ENCODE measurements at regions of chr14 and their contacts with region 1.

Region 1: DNA sequence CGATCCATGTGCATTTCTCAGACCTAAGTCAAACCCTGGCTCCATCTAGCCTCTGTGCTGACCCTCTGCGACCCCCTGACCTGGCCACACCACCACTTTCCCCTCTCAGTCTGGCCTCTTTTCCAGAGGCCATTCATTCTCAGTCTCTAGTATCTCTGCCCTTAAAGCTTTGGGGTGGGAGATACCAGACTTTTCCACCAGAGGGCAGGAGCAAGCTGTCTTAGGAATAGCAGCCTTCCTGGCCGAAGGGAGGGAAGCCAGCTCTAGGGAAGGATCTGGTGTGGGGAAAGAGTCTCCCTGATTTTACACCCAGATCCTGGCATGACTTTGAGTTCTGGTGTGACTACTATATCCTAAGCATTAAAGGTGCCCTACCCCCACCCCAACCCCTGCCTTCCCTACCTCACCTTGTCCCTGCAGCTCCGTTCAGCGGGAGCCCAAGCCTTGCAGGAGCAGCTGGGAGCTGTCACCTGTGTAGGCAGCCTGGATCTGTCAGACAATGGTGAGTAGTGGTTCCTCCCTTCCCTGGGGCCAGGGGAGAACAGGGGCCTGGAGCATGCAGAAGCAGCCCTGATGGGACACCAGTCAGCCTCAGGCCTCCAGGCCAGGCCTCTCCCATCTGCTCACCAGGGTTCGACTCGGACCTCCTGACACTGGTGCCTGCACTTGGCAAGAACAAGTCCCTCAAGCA is 6.6 kb downstream of the CARMIL3 start:
- DNase-seq: peak; percentile 43 to 67 (median 52)
- H3K4me3 ChIP-seq: no peak overlapping the region
- H3K4me3 Mint-ChIP-seq: peak overlapping the region in 1 of 7 donors; percentile 22
- H3K27ac ChIP-seq: no peak overlapping the region
- H3K27ac Mint-ChIP-seq: peak overlapping the region in 3 of 8 donors; percentile 65 to 86 (median 85)
- H3K4me1 ChIP-seq: no peaks in the 10 kb centered on the region
- H3K4me1 Mint-ChIP-seq: peaks cover 3 to 8% (median 4%) of the 10 kb centered on the region in 3 donors
- H3K27me3 ChIP-seq: no peaks in the 10 kb centered on the region
- H3K27me3 Mint-ChIP-seq: peaks cover 0 to 1% of the 10 kb centered on the region in 2 donors

Region 2: GRCh38 chr14:24080888-24081738 is 22.7 kb after region 1 on chr14:
- CTCF ChIA-PET with region 1: interaction called, 67 read pairs
- POLR2A ChIA-PET with region 1: interaction called, 5 read pairs
- DNase-seq: peak; percentile 36 to 80 (median 64)
- H3K4me3 ChIP-seq: peak overlapping the region; percentile 62
- H3K4me3 Mint-ChIP-seq: peak overlapping the region; percentile 85 to 93 (median 88)
- H3K27ac ChIP-seq: peak overlapping the region; percentile 61
- H3K27ac Mint-ChIP-seq: peak overlapping the region; percentile 53 to 92 (median 82)
- H3K4me1 ChIP-seq: peaks cover 9% of the 10 kb centered on the region
- H3K4me1 Mint-ChIP-seq: peaks cover 15 to 18% (median 16%) of the 10 kb centered on the region in 3 donors
- H3K27me3 ChIP-seq: no peaks in the 10 kb centered on the region
- H3K27me3 Mint-ChIP-seq: peaks cover 0 to 2% of the 10 kb centered on the region in 2 donors

Region 3: GRCh38 chr14:24339284-24340151 is 281.1 kb after region 1 on chr14 and contains the start of gene RIPK3:
- CTCF ChIA-PET with region 1: no interaction called
- POLR2A ChIA-PET with region 1: no interaction called
- DNase-seq: peak; percentile 50 to 75 (median 57)
- H3K4me3 ChIP-seq: peak within 1 kb of the TSS; percentile 92
- H3K4me3 Mint-ChIP-seq: peak within 1 kb of the TSS; percentile 95 to 97 (median 97)
- H3K27ac ChIP-seq: peak within 1 kb of the TSS; percentile 60
- H3K27ac Mint-ChIP-seq: peak within 1 kb of the TSS; percentile 55 to 96 (median 93)
- H3K4me1 ChIP-seq: peaks cover 31% of the 10 kb centered on the region
- H3K4me1 Mint-ChIP-seq: peaks cover 29 to 50% (median 43%) of the 10 kb centered on the region in 3 donors
- H3K27me3 ChIP-seq: peaks cover 10% of the 10 kb centered on the region
- H3K27me3 Mint-ChIP-seq: peaks cover 15 to 19% of the 10 kb centered on the region in 2 donors
- total RNA-seq, gene RIPK3: 11.6 to 12.5 TPM

Measured in CD8-positive, alpha-beta memory T cell (primary cell).